PC-9 (cell line): ENCODE measurements at regions of chr3 and their contacts with region 1.

Region 1: GRCh38 chr3:140528940-140529495 is 148.8 kb upstream of the TRIM42 start:
- DNase-seq: peak; percentile 94 to 99
- H3K4me3 ChIP-seq: 0 out of 2 replicates have a peak overlapping the region, but pooled peaks have one; percentile 25
- H3K27ac ChIP-seq: peak overlapping the region; percentile 96
- H3K4me1 ChIP-seq: peaks cover 35% of the 10 kb centered on the region
- H3K27me3 ChIP-seq: no peaks in the 10 kb centered on the region
- CTCF ChIP-seq: no peak

Region 2: DNA sequence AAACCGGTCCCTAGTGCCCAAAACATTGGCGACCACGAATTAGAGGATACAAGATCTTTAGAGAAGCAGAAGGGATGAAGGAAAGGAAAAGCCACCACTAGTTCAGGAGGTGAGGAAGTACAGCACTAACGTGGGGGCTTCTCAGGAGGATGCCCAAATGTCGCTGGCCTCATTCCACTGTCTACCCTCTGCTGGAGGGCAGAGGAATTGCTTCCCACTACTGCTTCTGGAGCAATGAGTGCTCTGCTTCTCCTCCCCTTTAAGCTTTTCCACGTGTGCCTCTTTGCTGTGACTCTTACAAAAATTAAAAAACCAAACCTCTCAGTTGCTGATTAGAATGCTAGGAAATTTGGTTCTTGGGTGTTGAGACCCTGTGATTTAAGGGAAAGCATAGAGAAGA is 312.8 kb before region 1 on chr3:
- CTCF ChIA-PET with region 1: no interaction called
- POLR2A ChIA-PET with region 1: no interaction called
- intact Hi-C with region 1: loop called (anchors 5 kb)
- DNase-seq: no peak
- H3K4me3 ChIP-seq: no peak overlapping the region
- H3K27ac ChIP-seq: no peak overlapping the region
- H3K4me1 ChIP-seq: 0 out of 2 replicates have a peak, but pooled peaks cover 5% of the 10 kb centered on the region
- H3K27me3 ChIP-seq: no peaks in the 10 kb centered on the region
- CTCF ChIP-seq: peak; percentile 60

Region 3: GRCh38 chr3:140420621-140421357 is 108.2 kb before region 1 on chr3:
- CTCF ChIA-PET with region 1: no interaction called
- POLR2A ChIA-PET with region 1: no interaction called
- intact Hi-C with region 1: loop called (anchors 2 kb)
- DNase-seq: no peak
- H3K4me3 ChIP-seq: no peak overlapping the region
- H3K27ac ChIP-seq: no peak overlapping the region
- H3K4me1 ChIP-seq: 0 out of 2 replicates have a peak, but pooled peaks cover 5% of the 10 kb centered on the region
- H3K27me3 ChIP-seq: no peaks in the 10 kb centered on the region
- CTCF ChIP-seq: no peak

Region 4: DNA sequence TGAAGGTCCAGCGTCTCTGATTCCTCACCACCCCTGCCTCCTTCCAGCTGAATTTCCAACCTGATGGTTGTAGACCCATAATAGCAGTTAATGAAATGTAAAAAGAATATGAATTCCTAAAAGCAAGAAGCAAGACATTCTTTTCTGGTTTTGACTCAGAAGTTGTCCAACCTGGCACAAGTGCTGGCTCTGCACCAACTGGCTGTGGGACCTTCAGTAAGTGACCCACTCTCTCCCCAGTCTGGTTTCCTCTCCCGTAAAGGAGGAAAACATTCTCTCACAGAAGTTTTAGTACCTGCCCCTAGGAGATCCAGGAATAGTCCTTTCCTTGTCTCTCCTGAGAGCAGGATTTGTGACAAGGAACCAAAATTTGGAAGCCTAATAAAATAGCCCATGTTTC is 88.0 kb before region 1 on chr3:
- CTCF ChIA-PET with region 1: no interaction called
- POLR2A ChIA-PET with region 1: interaction called, 4 read pairs
- intact Hi-C with region 1: loop called (anchors 1 kb)
- DNase-seq: peak; percentile 74 to 83
- H3K4me3 ChIP-seq: no peak overlapping the region
- H3K27ac ChIP-seq: peak overlapping the region; percentile 66
- H3K4me1 ChIP-seq: peaks cover 22% of the 10 kb centered on the region
- H3K27me3 ChIP-seq: no peaks in the 10 kb centered on the region
- CTCF ChIP-seq: no peak

Region 5: DNA sequence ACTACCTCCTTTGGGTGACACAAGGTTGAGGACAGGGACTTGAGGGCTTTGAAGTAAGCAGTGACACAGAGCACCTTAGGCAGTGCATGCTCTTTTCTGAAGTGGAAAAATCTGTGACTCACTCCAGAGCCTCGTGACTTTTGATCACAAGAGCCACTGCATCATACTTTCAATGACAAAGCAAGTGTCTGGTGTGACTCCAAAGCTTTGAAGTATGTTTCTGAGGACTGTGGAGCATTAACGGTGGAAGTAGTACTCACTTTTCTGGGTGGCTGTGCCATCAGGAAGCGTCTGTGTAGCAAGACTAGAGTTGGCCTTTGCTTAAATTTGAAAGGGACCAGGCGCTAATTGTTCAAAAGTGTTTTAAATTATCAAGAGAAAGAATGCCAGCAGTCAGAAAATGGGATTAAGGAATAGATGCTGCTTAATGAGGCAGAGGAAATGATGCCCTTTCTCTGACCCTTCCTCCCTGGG is 61.9 kb before region 1 on chr3:
- CTCF ChIA-PET with region 1: no interaction called
- POLR2A ChIA-PET with region 1: no interaction called
- intact Hi-C with region 1: loop called (anchors 1 kb)
- DNase-seq: peak; percentile 50 to 93
- H3K4me3 ChIP-seq: no peak overlapping the region
- H3K27ac ChIP-seq: peak overlapping the region; percentile 92
- H3K4me1 ChIP-seq: peaks cover 33% of the 10 kb centered on the region
- H3K27me3 ChIP-seq: no peaks in the 10 kb centered on the region
- CTCF ChIP-seq: no peak

Region 6: DNA sequence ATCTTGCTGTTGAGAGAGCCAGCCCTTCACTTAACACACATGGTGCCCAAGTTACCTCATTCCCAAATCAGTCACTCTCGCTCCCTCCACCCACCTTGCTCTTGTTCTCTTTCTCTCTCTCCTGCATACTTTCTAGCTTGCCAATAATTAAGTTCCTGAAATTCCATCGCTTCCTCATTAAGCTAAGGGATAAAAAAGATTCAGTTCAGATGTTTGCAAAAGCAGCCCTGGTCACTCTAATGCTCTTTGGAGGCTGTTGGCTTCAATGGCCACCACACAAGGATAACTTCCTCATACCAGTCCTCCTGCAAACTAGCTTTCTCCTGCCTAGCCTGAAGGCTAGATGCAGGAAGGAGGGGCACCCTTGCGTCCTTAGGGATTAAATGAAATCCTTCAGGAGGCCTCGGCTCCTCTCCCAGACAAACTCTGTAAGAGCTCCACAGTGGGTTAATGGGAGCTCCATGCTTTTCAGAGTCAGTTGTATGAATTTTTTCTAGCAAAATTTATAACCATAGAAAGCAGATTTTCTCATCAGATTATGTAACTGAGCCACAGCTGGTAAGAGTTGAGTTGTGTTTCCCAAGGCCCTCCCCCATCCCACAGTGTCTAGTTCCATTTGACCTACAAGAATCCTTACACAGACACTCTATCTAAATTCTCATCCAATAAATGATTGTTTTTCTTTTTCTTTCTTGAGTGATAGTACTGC is 27.8 kb before region 1 on chr3:
- CTCF ChIA-PET with region 1: no interaction called
- POLR2A ChIA-PET with region 1: no interaction called
- intact Hi-C with region 1: loop called (anchors 1 kb)
- DNase-seq: peak; percentile 62 to 82
- H3K4me3 ChIP-seq: no peak overlapping the region
- H3K27ac ChIP-seq: peak overlapping the region; percentile 41
- H3K4me1 ChIP-seq: peaks cover 19% of the 10 kb centered on the region
- H3K27me3 ChIP-seq: no peaks in the 10 kb centered on the region
- CTCF ChIP-seq: no peak

Region 7: DNA sequence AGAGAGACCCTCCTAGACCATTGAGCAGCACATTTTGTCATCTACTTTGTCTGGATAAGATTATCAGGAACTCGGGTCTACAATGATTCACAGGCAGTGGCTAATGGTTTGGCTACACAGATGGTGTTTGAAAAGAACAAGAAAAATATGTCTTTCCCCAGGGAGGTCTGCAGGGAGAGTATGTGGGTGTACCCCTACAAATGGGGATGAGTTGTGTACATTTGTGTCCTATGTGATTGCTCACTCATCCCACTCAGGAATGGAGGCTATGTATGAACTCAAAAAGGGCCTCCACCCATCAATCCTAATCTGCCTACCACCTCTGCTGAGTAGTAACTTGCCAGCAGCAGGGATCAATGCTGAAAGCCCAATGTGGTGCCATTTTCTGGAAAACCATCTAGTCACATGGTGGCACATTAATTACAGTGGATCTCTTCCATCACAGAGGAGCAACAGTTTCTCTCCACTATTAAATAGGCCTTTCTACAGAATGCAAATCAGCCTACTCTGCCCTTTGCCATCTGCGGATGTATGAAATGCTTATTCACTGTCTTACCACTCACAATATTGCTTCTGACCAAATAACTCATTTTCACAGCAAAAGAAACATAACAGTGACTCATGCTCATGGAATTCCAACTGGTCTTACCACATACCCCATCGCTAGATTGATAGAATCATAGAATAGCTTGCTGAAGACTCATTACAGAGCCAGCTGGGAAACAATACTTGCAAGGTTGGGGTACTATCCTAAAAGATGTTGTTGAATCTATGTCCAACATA is 100.5 kb after region 1 on chr3:
- CTCF ChIA-PET with region 1: no interaction called
- POLR2A ChIA-PET with region 1: no interaction called
- intact Hi-C with region 1: loop called (anchors 1 kb)
- DNase-seq: peak; percentile 56 to 92
- H3K4me3 ChIP-seq: no peak overlapping the region
- H3K27ac ChIP-seq: peak overlapping the region; percentile 72
- H3K4me1 ChIP-seq: peaks cover 30% of the 10 kb centered on the region
- H3K27me3 ChIP-seq: no peaks in the 10 kb centered on the region
- CTCF ChIP-seq: no peak